BJ (cell line): ENCODE measurements at regions of chr1 and their contacts with region 1.

Region 1: GRCh38 chr1:232248276-232248820 is 381.6 kb downstream of the SIPA1L2 start:
- DNase-seq: no peak
- H3K4me3 ChIP-seq: no peak overlapping the region
- H3K27me3 ChIP-seq: no peaks in the 10 kb centered on the region
- CTCF ChIP-seq: no peak

Region 2: DNA sequence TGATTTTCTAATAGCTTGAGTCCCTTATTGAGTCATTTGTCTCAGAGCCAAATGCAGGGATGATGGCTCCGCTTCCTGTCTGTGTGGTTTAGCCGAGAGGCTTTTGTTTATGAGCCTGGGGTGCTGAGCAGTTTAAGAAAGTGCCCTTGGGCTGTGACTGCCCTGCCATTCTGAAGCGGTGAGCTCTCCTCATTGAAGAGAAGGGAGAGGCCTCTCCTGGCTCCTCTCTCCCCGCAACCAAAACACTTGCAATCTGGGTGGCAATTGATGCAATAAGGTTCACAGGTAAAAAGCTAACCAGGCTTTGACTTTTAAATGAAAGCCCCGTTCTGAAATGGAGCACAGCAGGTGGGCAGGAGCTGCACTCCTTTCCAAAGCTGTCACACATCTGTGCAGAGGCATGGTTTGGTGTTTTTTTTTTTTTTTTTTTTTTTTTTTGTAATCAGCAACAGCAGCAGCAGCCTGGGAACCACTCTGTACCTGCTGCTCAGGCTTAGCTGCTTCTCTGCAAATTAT is 22.1 kb before region 1 on chr1:
- CTCF ChIA-PET with region 1: no interaction called
- POLR2A ChIA-PET with region 1: interaction called, 15 read pairs
- DNase-seq: peak; percentile 60
- H3K4me3 ChIP-seq: no peak overlapping the region
- H3K27me3 ChIP-seq: no peaks in the 10 kb centered on the region
- CTCF ChIP-seq: no peak

Region 3: DNA sequence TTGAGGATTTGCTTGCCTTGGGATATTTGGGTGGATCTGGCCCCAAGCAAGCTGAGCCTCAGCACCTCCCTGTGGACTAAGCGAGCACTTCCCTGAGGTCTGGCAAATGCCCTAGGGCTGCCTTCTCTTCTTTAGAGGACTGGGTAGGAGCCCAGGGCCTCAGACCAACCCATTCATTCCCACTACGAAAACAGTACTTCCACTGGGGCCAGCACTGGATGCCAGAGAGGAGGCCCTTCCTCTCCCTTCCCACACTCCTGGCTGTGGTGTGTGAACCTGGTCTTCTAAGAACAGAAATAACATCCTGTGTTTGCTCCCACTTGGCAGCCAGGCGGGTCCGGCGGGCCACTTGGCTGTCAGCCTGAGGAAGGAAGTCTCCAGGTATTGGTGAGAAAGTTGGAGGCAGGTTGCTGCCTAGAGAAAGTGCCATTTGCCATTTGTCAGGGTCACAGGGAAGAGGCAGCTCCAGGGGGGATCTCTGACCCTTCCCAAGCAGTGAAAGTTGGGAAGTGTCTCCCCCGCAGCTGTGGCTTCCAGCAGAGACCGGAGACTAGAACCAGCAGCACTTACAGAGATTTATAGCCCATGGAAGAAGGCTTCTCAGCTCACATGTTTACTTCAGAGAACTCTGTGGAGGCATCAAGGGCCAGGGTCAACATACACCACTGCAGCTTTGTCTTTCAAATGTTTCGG is 58.1 kb after region 1 on chr1:
- CTCF ChIA-PET with region 1: no interaction called
- POLR2A ChIA-PET with region 1: no interaction called
- DNase-seq: no peak
- H3K4me3 ChIP-seq: no peak overlapping the region
- H3K27me3 ChIP-seq: no peaks in the 10 kb centered on the region
- CTCF ChIP-seq: no peak

Region 4: DNA sequence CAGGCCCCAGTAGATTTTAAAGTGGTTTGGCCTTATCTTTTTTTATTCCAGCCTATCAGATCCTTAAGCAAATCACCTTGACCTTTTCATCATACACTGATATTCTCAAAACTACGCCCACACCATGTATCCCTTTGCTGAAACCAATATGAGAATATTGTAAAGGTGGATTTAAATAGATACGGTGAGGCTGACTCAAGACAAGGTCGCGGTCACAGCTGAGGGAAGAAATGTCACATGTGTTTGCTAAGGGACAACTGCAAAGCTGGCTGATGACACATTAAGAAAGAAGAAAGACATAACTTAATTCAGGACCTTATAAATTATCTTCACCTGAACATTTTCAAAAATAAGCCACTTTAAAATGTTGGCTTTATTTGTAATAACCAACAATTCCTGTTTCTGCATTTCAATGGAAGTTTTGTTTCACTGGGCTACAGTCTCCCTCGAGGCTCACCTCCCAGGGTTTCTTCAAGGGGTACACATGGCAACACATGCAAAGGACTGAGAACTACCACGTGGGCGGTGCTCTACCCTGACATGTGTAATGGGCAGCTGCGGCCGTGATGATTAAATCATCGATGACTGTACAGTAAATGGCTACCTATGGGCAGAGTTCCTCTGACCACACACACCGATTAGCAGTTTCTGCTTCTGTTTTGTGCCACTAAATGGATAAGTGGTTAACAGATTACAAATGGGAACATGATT is 192.1 kb after region 1 on chr1:
- CTCF ChIA-PET with region 1: no interaction called
- POLR2A ChIA-PET with region 1: no interaction called
- DNase-seq: no peak
- H3K4me3 ChIP-seq: no peak overlapping the region
- H3K27me3 ChIP-seq: no peaks in the 10 kb centered on the region; the same call in 1 of the 2 replicates
- CTCF ChIP-seq: no peak

Region 5: GRCh38 chr1:232611834-232612233 is 363.5 kb after region 1 on chr1:
- CTCF ChIA-PET with region 1: no interaction called
- POLR2A ChIA-PET with region 1: no interaction called
- DNase-seq: no peak
- H3K4me3 ChIP-seq: no peak overlapping the region
- H3K27me3 ChIP-seq: no peaks in the 10 kb centered on the region
- CTCF ChIP-seq: no peak